Activated CD8-positive, alpha-beta T cell treated with anti-CD3 and anti-CD28 coated beads for 36 hours (primary cell): ENCODE measurements at regions of chr6 and their contacts with region 1.

Region 1: GRCh38 chr6:117482240-117483003 is at the start of gene DCBLD1:
- DNase-seq: peak; percentile 57
- ATAC-seq: peak; percentile 82
- H3K4me3 Mint-ChIP-seq: peak within 1 kb of the TSS; percentile 80
- H3K27ac Mint-ChIP-seq: peak within 1 kb of the TSS; percentile 56
- H3K4me1 Mint-ChIP-seq: peaks cover 13% of the 10 kb centered on the region
- H3K27me3 Mint-ChIP-seq: peaks cover 43% of the 10 kb centered on the region
- CTCF ChIP-seq: no peak
- total RNA-seq, gene DCBLD1: 2.2 to 2.3 TPM

Region 2: GRCh38 chr6:117449549-117450439 is 32.6 kb before region 1 on chr6:
- CTCF ChIA-PET with region 1: interaction called, 13 read pairs
- POLR2A ChIA-PET with region 1: no interaction called
- intact Hi-C with region 1: no loop called
- DNase-seq: peak; percentile 79
- ATAC-seq: no peak
- H3K4me3 Mint-ChIP-seq: no peak overlapping the region
- H3K27ac Mint-ChIP-seq: no peak overlapping the region
- H3K4me1 Mint-ChIP-seq: no peaks in the 10 kb centered on the region
- H3K27me3 Mint-ChIP-seq: peaks cover 23% of the 10 kb centered on the region
- CTCF ChIP-seq: peak; percentile 86

Region 3: GRCh38 chr6:117547688-117548621 is 65.5 kb after region 1 on chr6:
- CTCF ChIA-PET with region 1: interaction called, 47 read pairs
- POLR2A ChIA-PET with region 1: interaction called, 12 read pairs
- intact Hi-C with region 1: loop called (anchors 2 kb)
- DNase-seq: peak; percentile 66
- ATAC-seq: peak; percentile 47
- H3K4me3 Mint-ChIP-seq: peak overlapping the region; percentile 77
- H3K27ac Mint-ChIP-seq: peak overlapping the region; percentile 84
- H3K4me1 Mint-ChIP-seq: peaks cover 39% of the 10 kb centered on the region
- H3K27me3 Mint-ChIP-seq: peaks cover 2% of the 10 kb centered on the region
- CTCF ChIP-seq: no peak